ENCODE measurements at regions of chr2 and their contacts with region 1.

Region 1: DNA sequence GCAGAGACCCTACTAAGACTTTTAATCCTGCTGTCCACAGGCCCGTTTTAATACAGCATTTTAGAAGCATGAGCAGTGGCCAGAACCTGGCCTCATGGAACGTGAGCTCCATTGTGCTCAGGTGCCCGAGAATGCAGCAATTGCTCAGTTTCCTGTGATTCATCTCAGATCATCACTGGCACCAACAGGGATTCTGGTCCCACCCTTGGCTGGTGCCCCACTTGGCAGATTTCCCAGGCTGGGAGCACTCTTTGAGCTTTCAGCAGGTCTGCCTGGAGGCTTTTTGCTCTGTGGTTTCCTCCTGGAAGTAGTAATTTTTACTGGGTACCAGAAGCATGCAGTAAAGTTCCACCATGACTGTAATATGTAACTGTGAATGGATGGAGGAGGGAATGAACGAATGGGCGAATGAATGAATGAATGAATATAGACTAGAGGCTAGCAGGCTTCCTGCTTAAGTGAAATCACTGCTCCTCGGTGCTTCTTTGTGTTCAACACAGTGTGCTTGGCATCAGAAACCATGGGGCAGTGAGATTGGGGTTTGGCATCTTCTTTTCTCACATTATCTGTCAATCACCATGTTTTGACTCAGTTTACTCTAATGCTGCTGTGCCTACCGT is 312.9 kb downstream of the PRKCE start:
- DNase-seq: peak; percentile 100
- ATAC-seq: peak; percentile 89
- H3K4me3 ChIP-seq: no peak overlapping the region
- H3K27ac ChIP-seq: peak overlapping the region; percentile 65
- H3K4me1 ChIP-seq: peaks cover 51% of the 10 kb centered on the region
- H3K27me3 ChIP-seq: no peaks in the 10 kb centered on the region
- CTCF ChIP-seq: no peak

Region 2: GRCh38 chr2:45946023-45946422 is 18.3 kb before region 1 on chr2:
- CTCF ChIA-PET with region 1: no interaction called
- POLR2A ChIA-PET with region 1: interaction called, 3 read pairs
- intact Hi-C with region 1: loop called (anchors 2 kb)
- DNase-seq: peak; percentile 99
- ATAC-seq: peak; percentile 95
- H3K4me3 ChIP-seq: no peak overlapping the region
- H3K27ac ChIP-seq: peak overlapping the region; percentile 75
- H3K4me1 ChIP-seq: peaks cover 39% of the 10 kb centered on the region
- H3K27me3 ChIP-seq: no peaks in the 10 kb centered on the region
- CTCF ChIP-seq: no peak

Measured in PC-3 (cell line).